PC-9 (cell line): ENCODE measurements at regions of chr18 and their contacts with region 1.

Region 1: DNA sequence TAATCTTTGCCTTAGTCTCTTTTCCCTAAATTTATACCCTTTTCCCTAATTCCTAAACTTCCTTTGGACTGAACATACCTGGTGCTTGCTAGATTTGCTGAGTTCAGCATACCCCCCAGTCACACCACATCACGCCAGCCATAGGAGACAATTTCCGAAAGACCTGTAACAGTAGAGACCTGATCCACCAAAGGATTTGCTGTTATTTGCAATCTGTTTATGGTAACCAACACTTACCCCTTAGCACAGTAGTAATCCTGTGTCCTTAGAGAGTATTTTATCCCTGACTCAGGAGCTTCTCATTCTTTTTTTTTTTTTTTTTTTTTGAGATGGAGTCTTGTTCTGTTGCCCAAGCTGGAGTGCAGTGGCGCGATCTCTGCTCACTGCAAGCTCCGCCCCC is 8.6 kb downstream of the PSMG2 start:
- DNase-seq: no peak
- H3K4me3 ChIP-seq: no peak overlapping the region
- H3K27ac ChIP-seq: no peak overlapping the region
- H3K4me1 ChIP-seq: no peaks in the 10 kb centered on the region
- H3K27me3 ChIP-seq: no peaks in the 10 kb centered on the region
- CTCF ChIP-seq: no peak

Region 2: DNA sequence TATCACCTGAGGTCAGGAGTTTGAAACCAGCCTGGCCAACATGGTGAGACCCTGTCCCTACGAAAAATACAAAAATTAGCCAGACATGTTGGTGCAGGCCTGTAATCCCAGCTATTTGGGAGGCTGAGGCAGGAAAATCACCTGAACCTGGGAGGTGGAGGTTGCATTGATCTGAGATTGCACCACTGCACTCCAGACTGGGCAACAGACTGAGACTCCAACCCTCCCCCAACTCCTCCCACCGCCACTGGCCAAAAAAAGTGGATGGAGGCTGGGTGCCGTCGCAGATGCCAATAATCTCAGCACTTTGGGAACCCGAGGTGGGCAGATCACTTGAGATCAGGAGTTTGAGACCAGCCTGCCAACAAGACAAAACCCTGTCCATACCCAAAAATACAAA is 43.4 kb before region 1 on chr18:
- CTCF ChIA-PET with region 1: no interaction called
- POLR2A ChIA-PET with region 1: interaction called, 15 read pairs
- intact Hi-C with region 1: no loop called
- DNase-seq: no peak
- H3K4me3 ChIP-seq: no peak overlapping the region
- H3K27ac ChIP-seq: no peak overlapping the region
- H3K4me1 ChIP-seq: no peaks in the 10 kb centered on the region; the same call in 1 of the 2 replicates
- H3K27me3 ChIP-seq: no peaks in the 10 kb centered on the region
- CTCF ChIP-seq: no peak

Region 3: DNA sequence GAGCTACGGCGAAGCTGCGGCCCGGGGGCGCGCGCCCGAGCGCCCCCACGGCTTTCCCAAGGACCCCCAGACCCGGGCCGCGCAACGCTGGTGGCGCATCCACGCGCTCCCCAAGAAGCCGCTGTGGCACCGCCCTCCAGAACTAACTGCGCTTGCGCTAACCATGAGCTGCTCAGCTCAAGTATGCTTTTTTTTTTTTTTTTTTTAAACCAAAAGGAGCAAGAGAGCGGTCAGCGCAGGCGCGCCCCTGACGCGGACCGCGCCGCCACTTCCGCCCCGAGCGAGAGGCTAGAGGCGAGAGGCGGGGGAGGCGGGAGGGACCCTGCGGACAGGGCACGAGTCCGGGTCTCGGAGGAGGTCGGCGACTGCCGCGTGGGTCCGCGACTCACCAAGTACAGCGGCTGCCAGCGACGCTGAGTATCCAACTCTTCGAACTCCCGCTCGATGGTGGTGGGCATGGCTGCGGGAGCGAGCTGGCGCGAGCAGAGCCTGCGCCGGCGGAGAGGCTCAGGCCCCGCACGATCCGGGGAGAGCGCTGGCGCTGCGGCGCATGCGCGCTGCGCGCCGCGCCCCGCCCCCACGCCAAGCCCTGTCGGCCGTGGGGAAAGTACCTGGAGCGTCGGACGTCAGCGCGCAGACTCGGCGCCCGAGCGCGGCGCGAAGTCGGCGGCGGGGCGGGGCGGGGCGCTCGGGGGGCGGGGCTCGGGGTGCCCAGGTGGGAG is 172.4 kb after region 1 on chr18 and contains the start of gene PTPN2:
- CTCF ChIA-PET with region 1: no interaction called
- POLR2A ChIA-PET with region 1: no interaction called
- intact Hi-C with region 1: no loop called
- DNase-seq: peak; percentile 86 to 95
- H3K4me3 ChIP-seq: peak within 1 kb of the TSS; percentile 99
- H3K27ac ChIP-seq: peak within 1 kb of the TSS; percentile 95
- H3K4me1 ChIP-seq: peaks cover 33% of the 10 kb centered on the region
- H3K27me3 ChIP-seq: no peaks in the 10 kb centered on the region
- CTCF ChIP-seq: no peak
- total RNA-seq, gene PTPN2: 77.2 and 78.1 TPM in 2 replicates